SK-N-SH (cell line): ENCODE measurements at regions of chr19 and their contacts with region 1.

Region 1: DNA sequence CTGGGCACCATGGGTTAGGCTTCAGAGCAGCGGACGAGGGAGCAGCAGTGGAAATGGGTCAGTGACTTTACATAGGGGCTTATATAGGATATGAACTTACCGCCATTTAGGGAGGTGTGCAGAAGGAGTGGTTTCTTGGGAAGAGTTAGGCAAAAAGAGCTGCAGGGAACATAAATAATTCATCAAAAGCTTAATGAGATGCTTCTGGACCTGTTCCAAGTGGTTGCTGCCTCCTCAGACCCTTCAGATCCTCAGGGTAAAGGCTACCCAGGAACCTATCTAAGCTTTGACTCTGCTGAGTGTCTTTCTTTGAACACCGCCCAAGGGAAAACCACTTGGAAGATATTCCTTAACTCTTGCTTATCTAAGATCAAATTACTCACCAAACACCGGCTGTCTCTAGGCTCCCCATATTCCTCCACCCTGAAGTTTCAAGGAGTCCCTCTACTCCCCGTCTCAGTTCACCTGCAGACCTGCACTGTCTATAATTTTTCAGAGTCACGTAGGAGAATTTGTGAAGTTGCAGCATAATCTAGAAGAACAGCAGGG is at the start of gene IGFL4:
- DNase-seq: no peak
- H3K4me3 ChIP-seq: no peak within 1 kb of the TSS
- H3K27ac ChIP-seq: no peak within 1 kb of the TSS
- H3K4me1 ChIP-seq: no peaks in the 10 kb centered on the region; a peak in 1 of 4 replicates
- H3K27me3 ChIP-seq: peaks cover 66% of the 10 kb centered on the region; the same call in 1 of the 2 replicates
- CTCF ChIP-seq: no peak
- EP300 ChIP-seq: no peak
- RAD21 ChIP-seq: no peak
- polyA plus RNA-seq, gene IGFL4: not detected in 2 replicates

Region 2: DNA sequence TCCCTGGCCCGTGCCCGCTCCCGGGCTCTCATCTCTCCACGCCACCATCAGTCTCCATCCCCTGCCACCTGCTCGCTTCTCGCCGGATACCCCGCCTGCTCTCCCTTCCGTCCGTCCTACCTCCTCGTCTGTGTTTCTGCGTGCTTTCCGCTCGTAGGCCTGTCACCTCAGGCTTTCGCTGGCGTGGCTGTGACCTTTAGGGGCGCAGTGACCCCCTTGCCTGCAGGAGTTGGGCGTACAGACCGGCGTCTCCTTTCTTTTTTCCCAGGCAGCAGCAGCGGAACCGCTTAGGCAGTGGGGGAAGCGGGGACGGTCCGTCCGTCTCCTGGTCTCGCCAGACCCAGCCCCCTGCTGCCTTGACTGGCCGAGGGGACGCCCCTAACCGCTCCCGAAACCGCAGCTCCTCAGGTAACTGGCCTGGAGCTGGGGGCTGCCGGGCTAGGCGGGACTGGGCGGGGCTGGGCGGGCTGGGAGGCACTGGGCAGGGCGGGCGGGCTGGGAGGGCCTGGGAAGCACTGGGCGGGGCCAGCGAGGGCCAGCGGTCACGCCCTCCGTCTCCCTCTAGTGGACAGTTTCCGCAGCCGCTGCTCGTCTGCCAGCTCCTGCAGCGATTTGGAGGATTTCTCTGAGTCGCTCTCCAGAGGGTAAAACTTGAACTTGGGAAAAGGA is 24.5 kb before region 1 on chr19:
- CTCF ChIA-PET with region 1: interaction called, 10 read pairs
- POLR2A ChIA-PET with region 1: no interaction called
- DNase-seq: peak; percentile 94
- H3K4me3 ChIP-seq: peak overlapping the region; percentile 57 to 68
- H3K27ac ChIP-seq: no peak overlapping the region
- H3K4me1 ChIP-seq: peaks cover 0 to 22% of the 10 kb centered on the region in 2 experiments; a peak in 2 of 4 replicates
- H3K27me3 ChIP-seq: no peaks in the 10 kb centered on the region
- CTCF ChIP-seq: peak; percentile 65
- EP300 ChIP-seq: no peak
- RAD21 ChIP-seq: peak; percentile 46

Region 3: GRCh38 chr19:46296722-46297461 is 255.9 kb after region 1 on chr19 and contains the start of gene HIF3A:
- CTCF ChIA-PET with region 1: no interaction called
- POLR2A ChIA-PET with region 1: no interaction called
- DNase-seq: peak; percentile 90
- H3K4me3 ChIP-seq: peak within 1 kb of the TSS; percentile 33 to 48; a peak in 3 of 4 replicates
- H3K27ac ChIP-seq: no peak within 1 kb of the TSS
- H3K4me1 ChIP-seq: peaks cover 15 to 34% of the 10 kb centered on the region in 2 experiments
- H3K27me3 ChIP-seq: no peaks in the 10 kb centered on the region
- CTCF ChIP-seq: no peak
- EP300 ChIP-seq: no peak
- RAD21 ChIP-seq: no peak
- polyA plus RNA-seq, gene HIF3A: 0.92 and 0.96 TPM in 2 replicates